Right ventricle myocardium superior (tissue), 1 donor: ENCODE measurements at regions of chr12 and their contacts with region 1.

Region 1: DNA sequence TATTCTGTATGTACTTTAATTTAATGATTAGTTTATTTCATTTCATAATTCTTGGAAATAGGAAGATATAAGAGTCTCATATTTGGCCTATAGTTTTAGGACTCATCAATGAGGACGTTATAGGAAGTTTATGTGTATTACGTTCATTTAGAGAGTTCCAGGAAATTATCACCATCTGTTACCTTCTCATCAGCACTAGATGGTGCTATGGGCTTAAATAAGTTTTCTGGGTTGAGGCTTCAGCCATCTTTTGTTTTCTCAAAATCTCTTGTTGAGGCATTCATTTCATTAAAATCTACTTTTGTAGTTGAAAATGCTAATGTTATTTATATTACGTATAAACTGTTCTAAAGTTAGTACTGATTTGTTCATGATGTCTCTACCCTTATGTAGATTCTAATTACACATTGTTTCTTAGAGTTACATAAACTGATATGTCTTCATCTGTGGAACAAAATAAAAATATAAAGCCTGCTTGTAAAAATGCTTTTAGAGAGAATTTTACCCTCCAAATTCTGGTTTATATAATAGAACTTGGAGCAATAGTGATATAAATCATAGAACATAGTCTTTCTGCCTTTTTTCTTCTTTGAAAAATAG is 89.2 kb downstream of the CFAP54 start:
- DNase-seq: no peak
- ATAC-seq: peak; percentile 57

Region 2: GRCh38 chr12:96719660-96720363 is 141.2 kb after region 1 on chr12:
- intact Hi-C with region 1: no loop called
- DNase-seq: no peak
- ATAC-seq: no peak

Region 3: DNA sequence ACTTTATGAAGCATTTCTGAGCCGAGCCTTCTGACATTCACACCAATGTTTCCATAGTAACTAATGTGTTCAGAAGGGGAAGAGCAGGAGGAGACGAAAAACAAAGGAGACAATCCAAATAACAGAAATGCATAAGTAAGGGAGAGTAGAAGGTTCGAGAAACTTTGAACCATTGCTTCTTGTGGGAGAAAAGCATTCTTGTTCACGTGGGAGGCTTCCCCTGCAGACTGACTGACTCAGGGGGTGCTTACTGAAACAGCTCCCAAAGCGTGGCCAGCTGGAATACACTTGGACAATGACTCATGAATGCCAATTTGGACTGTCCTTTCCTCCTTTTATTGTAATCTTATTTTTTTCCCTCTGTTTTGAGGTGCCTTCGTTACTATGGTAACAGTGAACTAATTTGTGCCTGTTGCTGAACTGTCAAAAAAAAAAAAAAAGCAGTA is 402.4 kb after region 1 on chr12:
- intact Hi-C with region 1: loop called (anchors 5 kb)
- DNase-seq: no peak
- ATAC-seq: no peak

Region 4: GRCh38 chr12:97308576-97309198 is 730.1 kb after region 1 on chr12:
- intact Hi-C with region 1: loop called (anchors 10 kb)
- DNase-seq: no peak
- ATAC-seq: no peak